ENCODE measurements at regions of chr16 and their contacts with region 1.

Region 1: GRCh38 chr16:78122774-78123315 is 23.4 kb downstream of the WWOX start:
- DNase-seq: peak in 3 of 14 experiments; percentile 60 to 66 (median 61)
- ATAC-seq: peak; percentile 65
- H3K4me3 ChIP-seq: no peak overlapping the region
- H3K4me3 Mint-ChIP-seq: no peak overlapping the region
- H3K27ac ChIP-seq: no peak overlapping the region
- H3K27ac Mint-ChIP-seq: no peak overlapping the region
- H3K4me1 ChIP-seq: no peaks in the 10 kb centered on the region
- H3K4me1 Mint-ChIP-seq: peaks cover 4% of the 10 kb centered on the region
- H3K27me3 ChIP-seq: no peaks in the 10 kb centered on the region
- H3K27me3 Mint-ChIP-seq: no peaks in the 10 kb centered on the region
- CTCF ChIP-seq: peak; percentile 89

Region 2: DNA sequence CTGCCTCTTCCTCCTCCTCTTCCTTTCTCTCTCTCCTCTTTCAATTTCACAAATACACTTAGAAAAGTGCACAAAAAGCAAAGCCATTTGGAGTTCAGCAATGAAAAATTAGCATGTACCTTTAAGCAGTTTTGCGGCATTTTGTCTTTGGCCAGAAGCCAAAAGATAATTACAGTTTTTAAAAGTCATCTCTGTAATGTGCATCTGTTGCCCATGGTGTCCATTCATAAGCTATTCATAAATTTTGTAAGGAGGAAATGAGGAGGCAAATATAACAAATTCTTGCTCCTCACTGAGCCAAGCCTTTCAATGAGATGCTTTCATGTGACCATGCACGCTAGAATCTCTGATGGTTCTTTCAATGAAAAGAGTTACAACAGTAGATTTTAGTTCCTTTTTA is 1179.0 kb before region 1 on chr16:
- CTCF ChIA-PET with region 1: no interaction called
- POLR2A ChIA-PET with region 1: no interaction called
- intact Hi-C with region 1: no loop called
- DNase-seq: no peak
- ATAC-seq: no peak
- H3K4me3 ChIP-seq: no peak overlapping the region
- H3K4me3 Mint-ChIP-seq: no peak overlapping the region
- H3K27ac ChIP-seq: no peak overlapping the region
- H3K27ac Mint-ChIP-seq: no peak overlapping the region
- H3K4me1 ChIP-seq: no peaks in the 10 kb centered on the region
- H3K4me1 Mint-ChIP-seq: no peaks in the 10 kb centered on the region
- H3K27me3 ChIP-seq: peaks cover 0 to 2% of the 10 kb centered on the region in 2 experiments
- H3K27me3 Mint-ChIP-seq: no peaks in the 10 kb centered on the region
- CTCF ChIP-seq: no peak

Region 3: DNA sequence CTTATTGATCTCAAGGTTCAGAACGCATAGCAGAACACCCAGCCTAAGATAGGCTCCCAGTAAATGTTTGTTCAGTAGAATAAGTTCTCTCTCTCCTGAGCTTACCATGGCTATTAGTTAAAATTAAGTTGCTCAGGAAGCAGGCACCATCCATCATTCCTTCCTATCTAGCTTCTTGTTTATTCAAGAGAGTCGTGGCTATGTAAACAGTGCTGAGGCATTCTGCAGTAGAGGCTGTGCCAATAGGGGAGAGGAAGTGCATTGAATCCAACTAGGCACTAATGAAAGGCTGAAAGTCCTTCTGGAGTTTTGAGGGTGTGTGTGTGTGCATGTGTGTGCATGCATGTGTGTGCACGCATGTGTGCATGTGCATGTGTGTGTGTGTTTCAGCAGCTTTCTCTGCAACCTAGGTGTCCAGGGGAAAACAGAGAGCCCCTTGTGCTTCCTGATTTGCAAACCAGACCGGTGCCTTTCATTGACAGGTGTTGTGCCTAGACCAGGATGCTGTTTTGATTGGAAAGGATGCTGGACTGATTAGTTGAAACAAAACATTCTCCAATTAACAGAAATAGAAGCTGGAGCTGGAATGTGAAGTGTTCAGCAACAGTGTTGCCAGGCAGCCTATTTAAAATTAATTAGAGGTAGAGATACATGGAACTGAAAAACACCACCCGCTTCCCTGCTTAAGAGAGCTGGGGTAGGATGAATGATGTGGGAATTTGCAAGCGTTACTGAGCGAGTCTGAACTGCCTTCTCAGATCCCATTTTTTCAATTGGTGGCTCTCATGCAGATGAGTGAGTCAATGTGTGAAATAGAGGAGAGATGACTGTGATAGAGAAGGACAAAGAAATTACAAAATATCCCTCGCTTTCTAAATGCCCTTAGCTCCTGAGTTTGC is 203.8 kb before region 1 on chr16:
- CTCF ChIA-PET with region 1: no interaction called
- POLR2A ChIA-PET with region 1: no interaction called
- intact Hi-C with region 1: no loop called
- DNase-seq: no peak
- ATAC-seq: no peak
- H3K4me3 ChIP-seq: no peak overlapping the region
- H3K4me3 Mint-ChIP-seq: no peak overlapping the region
- H3K27ac ChIP-seq: no peak overlapping the region
- H3K27ac Mint-ChIP-seq: no peak overlapping the region
- H3K4me1 ChIP-seq: no peaks in the 10 kb centered on the region
- H3K4me1 Mint-ChIP-seq: no peaks in the 10 kb centered on the region
- H3K27me3 ChIP-seq: no peaks in the 10 kb centered on the region
- H3K27me3 Mint-ChIP-seq: peaks cover 6% of the 10 kb centered on the region
- CTCF ChIP-seq: no peak

Region 4: GRCh38 chr16:78034525-78034924 is 88.3 kb before region 1 on chr16:
- CTCF ChIA-PET with region 1: no interaction called
- POLR2A ChIA-PET with region 1: no interaction called
- intact Hi-C with region 1: no loop called
- DNase-seq: peak in 1 of 14 experiments; percentile 13
- ATAC-seq: peak; percentile 43
- H3K4me3 ChIP-seq: no peak overlapping the region
- H3K4me3 Mint-ChIP-seq: no peak overlapping the region
- H3K27ac ChIP-seq: no peak overlapping the region
- H3K27ac Mint-ChIP-seq: no peak overlapping the region
- H3K4me1 ChIP-seq: peaks cover 2% of the 10 kb centered on the region
- H3K4me1 Mint-ChIP-seq: peaks cover 32% of the 10 kb centered on the region
- H3K27me3 ChIP-seq: peaks cover 0 to 5% of the 10 kb centered on the region in 2 experiments
- H3K27me3 Mint-ChIP-seq: peaks cover 10% of the 10 kb centered on the region
- CTCF ChIP-seq: no peak

Region 5: GRCh38 chr16:78177987-78178386 is 55.1 kb after region 1 on chr16:
- CTCF ChIA-PET with region 1: no interaction called
- POLR2A ChIA-PET with region 1: no interaction called
- intact Hi-C with region 1: no loop called
- DNase-seq: no peak
- ATAC-seq: no peak
- H3K4me3 ChIP-seq: no peak overlapping the region
- H3K4me3 Mint-ChIP-seq: no peak overlapping the region
- H3K27ac ChIP-seq: no peak overlapping the region
- H3K27ac Mint-ChIP-seq: no peak overlapping the region
- H3K4me1 ChIP-seq: no peaks in the 10 kb centered on the region
- H3K4me1 Mint-ChIP-seq: no peaks in the 10 kb centered on the region
- H3K27me3 ChIP-seq: no peaks in the 10 kb centered on the region
- H3K27me3 Mint-ChIP-seq: no peaks in the 10 kb centered on the region
- CTCF ChIP-seq: no peak

Region 6: DNA sequence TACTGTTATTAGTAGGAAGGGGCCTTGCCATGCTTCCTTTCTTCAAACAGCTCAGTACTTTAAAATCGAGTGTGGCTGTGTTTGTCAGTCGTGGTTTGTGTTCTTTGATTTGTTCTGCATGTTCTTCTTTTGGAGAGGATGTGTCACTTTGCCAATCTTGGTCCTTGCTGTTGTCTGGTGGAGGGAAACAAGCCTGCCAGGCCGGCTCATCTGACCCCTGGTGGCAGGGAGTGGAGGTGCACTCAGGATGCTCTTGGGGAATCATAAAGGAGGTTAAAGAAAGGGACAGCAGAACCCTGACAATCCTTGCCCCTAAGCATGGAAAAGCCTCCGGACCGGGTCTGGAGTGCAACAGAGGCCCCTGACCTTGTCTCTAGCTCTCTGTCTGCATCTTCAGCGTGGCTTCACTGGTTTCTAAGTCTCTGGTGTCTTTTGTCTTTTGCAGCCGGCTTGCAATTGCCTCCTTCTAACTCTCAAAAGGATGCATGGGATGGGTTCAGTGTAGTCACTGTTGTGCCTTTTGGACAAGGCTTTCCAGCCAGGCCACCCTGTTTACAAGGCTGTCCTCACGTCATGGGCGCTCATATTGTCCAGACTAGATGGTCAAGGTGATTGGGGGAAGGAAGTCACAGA is 112.4 kb after region 1 on chr16:
- CTCF ChIA-PET with region 1: no interaction called
- POLR2A ChIA-PET with region 1: no interaction called
- intact Hi-C with region 1: loop called in 1 of 2 experiments (anchors 1 kb)
- DNase-seq: peak; percentile 23 to 72 (median 51)
- ATAC-seq: peak; percentile 52
- H3K4me3 ChIP-seq: no peak overlapping the region
- H3K4me3 Mint-ChIP-seq: no peak overlapping the region
- H3K27ac ChIP-seq: no peak overlapping the region
- H3K27ac Mint-ChIP-seq: no peak overlapping the region
- H3K4me1 ChIP-seq: no peaks in the 10 kb centered on the region
- H3K4me1 Mint-ChIP-seq: peaks cover 8% of the 10 kb centered on the region
- H3K27me3 ChIP-seq: no peaks in the 10 kb centered on the region
- H3K27me3 Mint-ChIP-seq: no peaks in the 10 kb centered on the region
- CTCF ChIP-seq: peak; percentile 86

Region 7: GRCh38 chr16:78437352-78437968 is 314.6 kb after region 1 on chr16:
- CTCF ChIA-PET with region 1: no interaction called
- POLR2A ChIA-PET with region 1: no interaction called
- intact Hi-C with region 1: loop called in 1 of 2 experiments (anchors 5 kb)
- DNase-seq: peak in 10 of 14 experiments; percentile 7 to 48 (median 16)
- ATAC-seq: no peak
- H3K4me3 ChIP-seq: no peak overlapping the region
- H3K4me3 Mint-ChIP-seq: no peak overlapping the region
- H3K27ac ChIP-seq: no peak overlapping the region
- H3K27ac Mint-ChIP-seq: no peak overlapping the region
- H3K4me1 ChIP-seq: no peaks in the 10 kb centered on the region
- H3K4me1 Mint-ChIP-seq: no peaks in the 10 kb centered on the region
- H3K27me3 ChIP-seq: no peaks in the 10 kb centered on the region
- H3K27me3 Mint-ChIP-seq: no peaks in the 10 kb centered on the region
- CTCF ChIP-seq: peak; percentile 86

Measured in CD4-positive, alpha-beta T cell (primary cell).